ENCODE measurements at regions of chr12 and their contacts with region 1.

Region 1: GRCh38 chr12:110619534-110619953 is 5.6 kb downstream of the TCTN1 start:
- DNase-seq: no peak
- ATAC-seq: peak; percentile 79
- H3K4me3 Mint-ChIP-seq: peak overlapping the region; percentile 84
- H3K27ac Mint-ChIP-seq: peak overlapping the region; percentile 94
- H3K4me1 Mint-ChIP-seq: peaks cover 79% of the 10 kb centered on the region
- H3K27me3 Mint-ChIP-seq: no peaks in the 10 kb centered on the region
- CTCF ChIP-seq: no peak

Region 2: DNA sequence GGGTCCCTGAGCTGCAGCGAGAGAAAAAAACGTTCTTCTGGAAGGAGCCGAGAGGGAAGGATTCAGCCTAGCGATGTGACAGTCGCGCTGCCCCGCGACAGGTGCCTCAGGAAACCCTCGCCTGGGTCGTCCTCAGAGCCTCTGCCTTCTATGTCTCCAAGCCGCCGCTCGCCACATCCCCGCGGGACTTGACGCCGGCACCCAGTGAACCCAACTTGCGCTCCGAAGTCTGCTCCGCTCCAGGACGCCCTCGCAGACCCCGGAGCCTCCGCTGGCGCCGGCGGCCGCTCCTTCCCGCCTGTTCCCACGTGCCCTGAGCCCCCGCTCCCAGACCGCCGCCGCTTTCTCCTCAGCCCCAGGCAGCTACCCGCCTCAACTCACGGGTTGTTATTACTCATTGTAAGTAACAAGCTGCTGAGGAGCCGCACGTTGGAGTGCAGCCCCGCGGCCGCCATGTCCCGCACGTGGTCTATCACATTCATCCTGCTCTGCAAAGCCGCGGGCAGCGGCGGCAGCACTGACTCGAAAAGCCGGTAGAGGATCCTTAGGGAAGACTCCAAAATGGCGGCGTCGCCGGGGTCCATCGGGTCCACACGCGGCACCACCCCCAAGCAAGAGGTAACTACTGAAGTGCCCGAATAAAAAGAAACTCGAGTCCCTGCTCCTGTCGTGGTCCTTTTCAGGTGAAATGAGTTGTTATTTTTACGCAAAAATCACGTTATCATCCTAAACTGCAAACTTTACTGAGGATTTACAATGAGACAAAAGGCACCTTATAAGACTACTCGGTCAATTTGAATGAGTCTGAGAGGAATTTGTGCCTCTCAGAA is 216.2 kb before region 1 on chr12 and contains the start of gene ANAPC7:
- CTCF ChIA-PET with region 1: no interaction called
- POLR2A ChIA-PET with region 1: no interaction called
- intact Hi-C with region 1: no loop called
- DNase-seq: peak; percentile 73
- ATAC-seq: peak; percentile 94
- H3K4me3 Mint-ChIP-seq: peak within 1 kb of the TSS; percentile 99
- H3K27ac Mint-ChIP-seq: peak within 1 kb of the TSS; percentile 99
- H3K4me1 Mint-ChIP-seq: peaks cover 33% of the 10 kb centered on the region
- H3K27me3 Mint-ChIP-seq: no peaks in the 10 kb centered on the region
- CTCF ChIP-seq: no peak
- total RNA-seq, gene ANAPC7: 69.8 and 76.2 TPM in 2 replicates

Region 3: GRCh38 chr12:110606253-110606611 is 13.3 kb before region 1 on chr12:
- CTCF ChIA-PET with region 1: interaction called, 23 read pairs
- POLR2A ChIA-PET with region 1: interaction called, 34 read pairs
- intact Hi-C with region 1: loop called (anchors 1 kb)
- DNase-seq: no peak
- ATAC-seq: no peak
- H3K4me3 Mint-ChIP-seq: peak overlapping the region; percentile 85
- H3K27ac Mint-ChIP-seq: peak overlapping the region; percentile 94
- H3K4me1 Mint-ChIP-seq: peaks cover 84% of the 10 kb centered on the region
- H3K27me3 Mint-ChIP-seq: no peaks in the 10 kb centered on the region
- CTCF ChIP-seq: no peak

Region 4: GRCh38 chr12:110647631-110648040 is 28.1 kb after region 1 on chr12:
- CTCF ChIA-PET with region 1: interaction called, 7 read pairs
- POLR2A ChIA-PET with region 1: interaction called, 20 read pairs
- intact Hi-C with region 1: loop called (anchors 1 kb)
- DNase-seq: peak; percentile 56
- ATAC-seq: peak; percentile 82
- H3K4me3 Mint-ChIP-seq: peak overlapping the region; percentile 45
- H3K27ac Mint-ChIP-seq: peak overlapping the region; percentile 89
- H3K4me1 Mint-ChIP-seq: peaks cover 96% of the 10 kb centered on the region
- H3K27me3 Mint-ChIP-seq: no peaks in the 10 kb centered on the region
- CTCF ChIP-seq: no peak

Region 5: DNA sequence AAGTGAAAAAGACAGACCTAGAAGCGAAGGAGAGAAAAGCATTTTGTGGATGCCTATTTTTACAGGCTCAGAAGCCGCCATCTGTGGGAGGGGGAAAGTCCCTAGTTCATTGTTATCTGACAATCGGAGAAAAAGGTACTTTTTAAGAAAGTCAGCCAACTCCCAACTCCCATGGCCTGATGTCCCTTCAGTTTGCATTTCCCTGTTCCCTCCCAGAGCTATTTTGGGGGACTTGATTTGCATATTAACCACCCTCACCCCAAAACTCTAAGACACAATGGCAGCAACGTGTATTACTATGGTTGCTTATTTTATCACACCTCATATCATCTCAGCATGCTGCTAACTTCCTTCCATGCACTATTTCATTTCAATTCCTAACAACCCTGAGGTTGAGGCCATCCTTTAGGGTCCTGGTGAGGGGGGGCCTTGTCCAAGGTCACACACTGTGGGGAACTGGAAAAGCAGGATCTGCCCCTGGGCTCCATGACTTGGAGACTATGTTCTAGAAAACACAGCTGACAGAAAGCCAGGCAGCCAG is 50.7 kb after region 1 on chr12:
- CTCF ChIA-PET with region 1: interaction called, 9 read pairs
- POLR2A ChIA-PET with region 1: interaction called, 13 read pairs
- intact Hi-C with region 1: loop called (anchors 2 kb)
- DNase-seq: no peak
- ATAC-seq: peak; percentile 36
- H3K4me3 Mint-ChIP-seq: peak overlapping the region; percentile 78
- H3K27ac Mint-ChIP-seq: peak overlapping the region; percentile 94
- H3K4me1 Mint-ChIP-seq: peaks cover 96% of the 10 kb centered on the region
- H3K27me3 Mint-ChIP-seq: no peaks in the 10 kb centered on the region
- CTCF ChIP-seq: no peak

Region 6: GRCh38 chr12:110698171-110698902 is 78.8 kb after region 1 on chr12:
- CTCF ChIA-PET with region 1: interaction called, 27 read pairs
- POLR2A ChIA-PET with region 1: interaction called, 5 read pairs
- intact Hi-C with region 1: loop called (anchors 1 kb)
- DNase-seq: peak; percentile 60
- ATAC-seq: peak; percentile 100
- H3K4me3 Mint-ChIP-seq: peak overlapping the region; percentile 61
- H3K27ac Mint-ChIP-seq: peak overlapping the region; percentile 91
- H3K4me1 Mint-ChIP-seq: peaks cover 38% of the 10 kb centered on the region
- H3K27me3 Mint-ChIP-seq: no peaks in the 10 kb centered on the region
- CTCF ChIP-seq: peak; percentile 17

Region 7: DNA sequence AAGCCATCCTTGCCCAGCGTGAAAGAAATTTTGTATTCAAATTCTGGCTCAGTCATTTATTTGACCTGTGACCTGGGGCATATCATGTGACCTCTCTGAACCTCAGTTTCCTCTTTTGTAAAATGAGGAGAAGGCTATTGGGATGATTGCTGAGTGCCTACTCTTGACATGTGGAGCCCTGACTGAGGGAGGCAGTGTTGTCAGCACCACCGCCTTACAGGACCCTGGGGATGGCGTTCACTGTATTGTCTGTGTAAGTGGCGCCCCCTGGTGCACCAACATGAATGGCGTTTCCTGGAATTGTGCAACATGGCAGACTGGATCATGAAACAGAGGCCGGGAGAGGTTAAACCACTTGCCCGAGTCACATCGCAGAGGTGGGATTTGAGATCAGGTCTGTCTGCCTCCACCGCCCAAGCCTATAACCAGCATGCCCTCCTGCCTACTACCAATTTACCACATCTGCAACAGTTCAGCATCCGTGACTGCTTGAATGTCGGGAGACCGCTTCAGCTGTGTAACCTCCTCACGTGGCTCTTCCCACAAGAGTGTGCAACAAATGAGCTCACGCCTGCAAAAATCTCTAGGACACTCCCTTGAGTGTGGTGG is 207.2 kb after region 1 on chr12:
- CTCF ChIA-PET with region 1: interaction called, 14 read pairs
- POLR2A ChIA-PET with region 1: interaction called, 8 read pairs
- intact Hi-C with region 1: loop called (anchors 1 kb)
- DNase-seq: peak; percentile 74
- ATAC-seq: peak; percentile 99
- H3K4me3 Mint-ChIP-seq: peak overlapping the region; percentile 80
- H3K27ac Mint-ChIP-seq: peak overlapping the region; percentile 41
- H3K4me1 Mint-ChIP-seq: peaks cover 6% of the 10 kb centered on the region
- H3K27me3 Mint-ChIP-seq: peaks cover 4% of the 10 kb centered on the region
- CTCF ChIP-seq: no peak

Measured in activated B cell treated with CpG ODN at 0.5 μM for 24 hours (primary cell).